ENCODE measurements at regions of chr2 and their contacts with region 1.

Region 1: DNA sequence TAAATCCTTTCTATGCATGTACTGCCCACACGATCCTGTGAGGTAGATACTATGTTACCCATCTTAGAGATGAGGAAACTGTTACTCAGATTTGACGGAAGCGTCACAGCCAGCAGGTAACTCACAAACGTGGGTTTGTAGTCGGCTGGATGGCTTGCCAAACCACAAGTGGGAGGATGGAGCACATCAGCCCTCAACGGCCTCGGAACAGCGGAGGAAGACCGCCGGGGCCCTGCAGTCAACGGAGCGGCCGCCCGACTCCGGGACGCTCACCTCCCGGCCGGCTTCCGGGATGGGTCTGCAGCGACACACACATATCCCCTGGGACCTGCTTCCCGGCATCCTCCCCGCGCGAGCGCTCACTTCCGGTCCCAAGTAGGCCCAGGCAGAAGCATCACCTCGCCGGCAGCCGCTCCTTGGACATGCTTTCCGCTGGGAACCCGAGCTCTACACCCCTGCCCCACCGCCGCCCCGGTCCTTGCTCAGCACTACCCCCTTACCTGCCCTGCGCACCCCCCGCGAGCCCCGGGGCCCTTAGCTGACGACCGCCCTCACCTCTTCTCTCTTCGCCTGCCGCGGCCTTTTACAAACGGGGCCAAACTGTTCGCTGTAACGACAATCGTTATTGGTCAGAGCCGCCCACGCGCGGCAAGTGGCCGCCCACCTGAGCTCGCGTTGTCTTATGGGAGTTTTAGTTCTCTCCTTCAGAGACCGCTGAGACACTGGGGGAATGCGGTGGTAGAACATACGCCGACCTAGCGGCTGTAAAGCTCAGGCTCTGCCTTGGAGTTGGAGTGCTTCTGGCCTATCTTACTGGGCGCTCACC is at the start of gene C2orf42:
- DNase-seq: peak; percentile 93 to 99 (median 96)

Region 2: DNA sequence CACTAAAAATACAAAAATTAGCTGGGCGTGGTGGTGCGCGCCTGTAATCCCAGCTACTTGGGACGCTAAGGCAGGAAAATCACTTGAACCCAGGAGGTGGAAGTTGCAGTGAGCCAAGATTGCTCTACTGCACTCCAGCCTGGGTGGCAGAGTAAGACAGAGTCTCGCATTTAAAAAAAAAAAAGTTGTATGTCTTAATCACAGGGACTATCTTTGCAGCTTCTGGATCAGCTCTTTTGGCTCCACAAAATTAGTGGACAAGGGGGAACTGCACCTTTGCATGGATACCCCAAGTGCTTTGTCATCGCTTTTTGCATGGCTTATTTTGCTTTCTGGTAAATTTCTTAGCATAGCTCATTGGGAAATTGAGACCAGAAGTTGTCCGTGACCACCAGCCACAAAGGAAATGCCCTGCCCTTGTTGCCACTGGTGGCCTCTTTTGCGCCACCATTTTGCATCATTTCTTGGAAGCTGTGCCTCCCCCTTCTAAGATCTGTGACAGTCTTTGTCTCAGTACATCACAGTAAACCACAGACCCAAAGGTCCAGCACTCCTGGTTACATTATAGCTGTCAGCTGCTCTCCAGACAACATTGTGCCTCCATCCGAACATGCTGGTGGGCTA is 147.3 kb before region 1 on chr2:
- intact Hi-C with region 1: no loop called
- DNase-seq: peak in 4 of 42 donors; percentile 14 to 28 (median 24)

Region 3: GRCh38 chr2:70248181-70248847 is 57.7 kb after region 1 on chr2 and contains the start of gene TIA1:
- intact Hi-C with region 1: loop called (anchors 2 kb)
- DNase-seq: peak; percentile 87 to 98 (median 95)

Region 4: DNA sequence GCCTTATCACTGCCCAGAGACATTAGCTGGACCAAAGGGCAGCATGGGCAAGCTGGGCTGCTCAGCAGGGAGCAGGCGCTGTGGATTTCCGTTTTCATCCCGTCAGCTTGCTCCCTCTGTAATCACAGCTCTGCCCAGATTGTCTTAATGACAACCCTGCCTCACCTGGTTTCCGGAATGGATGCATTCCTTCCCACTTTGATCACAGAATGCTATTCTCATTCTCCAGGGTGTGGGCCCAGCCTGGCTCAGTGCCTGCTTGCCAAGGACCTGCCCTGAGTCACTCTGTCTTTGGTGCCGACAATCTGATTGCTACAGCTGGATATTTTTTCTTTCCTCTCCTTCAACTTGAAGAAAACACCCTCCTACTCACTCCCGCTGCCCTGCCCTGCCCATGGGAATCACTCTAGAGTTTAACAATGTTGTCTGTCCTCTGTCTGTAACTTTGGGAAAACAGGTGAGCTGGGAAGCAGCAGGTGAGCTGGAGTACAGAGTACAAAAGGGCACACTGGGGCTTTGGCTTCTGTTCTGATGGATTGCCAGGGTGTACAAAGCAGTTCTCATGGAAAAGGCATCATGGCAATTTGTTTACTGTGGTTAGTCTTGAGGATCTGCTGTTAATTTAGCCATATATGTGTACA is 138.4 kb after region 1 on chr2:
- intact Hi-C with region 1: no loop called
- DNase-seq: peak in 2 of 42 donors; percentile 9 to 11

Region 5: DNA sequence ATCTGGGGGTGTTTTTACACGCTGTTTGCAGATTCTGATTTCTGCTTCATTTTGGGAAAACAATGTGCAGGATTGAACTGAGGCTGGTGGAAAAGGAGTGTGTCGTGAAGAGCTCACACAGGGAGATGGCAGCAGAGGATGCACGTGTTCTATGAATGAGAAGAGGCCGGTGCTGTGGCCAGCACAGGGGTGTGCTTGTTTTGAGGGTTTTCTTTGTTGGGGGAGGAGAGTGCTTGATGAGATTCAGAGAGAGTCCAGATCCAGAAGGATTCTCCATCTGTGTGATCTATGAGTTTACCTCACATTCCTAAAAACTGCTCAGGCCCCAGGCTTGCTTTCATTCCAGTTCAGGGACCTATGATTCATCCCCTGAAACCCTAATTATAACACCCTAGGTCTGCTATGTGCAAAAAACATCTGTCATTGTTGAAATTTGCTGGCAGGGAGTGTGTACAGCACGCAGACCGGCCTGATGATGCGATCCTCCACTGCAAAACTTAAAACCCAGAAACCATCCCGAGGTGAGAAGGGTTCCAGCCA is 350.9 kb after region 1 on chr2:
- intact Hi-C with region 1: no loop called
- DNase-seq: peak in 32 of 42 donors; percentile 23 to 78 (median 52)